ENCODE measurements at regions of chr11 and their contacts with region 1.

Region 1: DNA sequence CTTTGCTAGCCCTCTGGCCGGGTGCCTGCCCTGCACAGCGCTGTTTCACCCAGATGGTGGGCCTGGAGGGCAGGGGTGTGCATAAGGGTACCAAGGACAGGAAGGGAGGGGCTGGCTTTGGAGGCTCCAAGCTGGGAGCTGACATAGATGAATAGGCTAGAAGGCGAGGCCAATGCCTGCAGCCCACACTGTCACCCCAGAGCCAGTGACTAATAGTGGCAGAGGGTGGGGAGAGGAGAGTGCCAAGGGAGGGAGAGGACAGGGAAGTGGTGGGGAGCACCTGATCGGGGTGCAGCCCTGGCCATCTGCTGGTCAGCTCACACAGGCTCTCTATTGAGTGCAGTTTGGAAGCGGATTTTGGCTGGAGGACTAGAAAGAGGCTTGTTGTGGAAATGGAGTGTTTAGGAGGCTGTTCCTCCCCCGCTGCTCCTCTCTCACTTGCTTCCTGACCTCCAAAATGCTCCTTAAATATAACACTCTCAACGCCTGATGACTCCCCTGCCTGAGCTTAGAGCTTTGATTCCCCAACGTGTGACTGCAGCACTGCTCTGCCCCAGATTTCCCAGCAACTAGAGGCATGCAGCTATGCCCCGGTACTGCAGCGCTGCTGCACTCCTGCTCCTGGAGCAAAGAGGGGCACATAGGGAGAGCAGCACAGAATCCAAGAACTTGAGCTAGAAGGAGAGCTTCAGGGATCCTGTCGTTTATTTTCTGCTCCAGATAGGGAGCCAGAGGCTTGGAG is 89.2 kb downstream of the GRAMD1B start:
- DNase-seq: no peak
- CTCF ChIP-seq: no peak

Region 2: GRCh38 chr11:123505546-123506299 is 13.5 kb before region 1 on chr11:
- CTCF ChIA-PET with region 1: interaction called, 47 read pairs
- POLR2A ChIA-PET with region 1: no interaction called
- DNase-seq: no peak
- CTCF ChIP-seq: no peak

Region 3: GRCh38 chr11:123536690-123537437 is 17.6 kb after region 1 on chr11:
- CTCF ChIA-PET with region 1: interaction called, 17 read pairs
- POLR2A ChIA-PET with region 1: no interaction called
- DNase-seq: no peak
- CTCF ChIP-seq: no peak

Region 4: DNA sequence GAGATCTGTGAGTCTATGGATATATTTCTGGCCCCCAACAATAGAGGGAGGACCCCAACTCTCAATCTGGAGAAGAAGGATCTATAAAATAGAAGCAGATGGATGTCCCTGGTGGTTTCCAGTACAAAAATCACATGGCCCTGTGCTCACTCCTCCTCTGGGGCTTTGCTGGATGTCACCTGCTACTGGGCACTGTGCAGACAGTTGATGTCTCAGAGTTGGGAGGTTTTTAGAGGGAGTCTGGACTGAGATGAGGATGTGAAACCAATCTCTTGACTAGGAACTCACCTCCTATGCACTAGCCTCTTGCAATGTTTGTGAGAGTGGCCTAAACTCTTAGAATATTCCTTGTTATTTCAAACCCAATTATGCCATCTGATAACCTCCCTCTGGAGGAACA is 28.0 kb after region 1 on chr11:
- CTCF ChIA-PET with region 1: interaction called, 11 read pairs
- POLR2A ChIA-PET with region 1: no interaction called
- DNase-seq: peak; percentile 69
- CTCF ChIP-seq: no peak

Region 5: DNA sequence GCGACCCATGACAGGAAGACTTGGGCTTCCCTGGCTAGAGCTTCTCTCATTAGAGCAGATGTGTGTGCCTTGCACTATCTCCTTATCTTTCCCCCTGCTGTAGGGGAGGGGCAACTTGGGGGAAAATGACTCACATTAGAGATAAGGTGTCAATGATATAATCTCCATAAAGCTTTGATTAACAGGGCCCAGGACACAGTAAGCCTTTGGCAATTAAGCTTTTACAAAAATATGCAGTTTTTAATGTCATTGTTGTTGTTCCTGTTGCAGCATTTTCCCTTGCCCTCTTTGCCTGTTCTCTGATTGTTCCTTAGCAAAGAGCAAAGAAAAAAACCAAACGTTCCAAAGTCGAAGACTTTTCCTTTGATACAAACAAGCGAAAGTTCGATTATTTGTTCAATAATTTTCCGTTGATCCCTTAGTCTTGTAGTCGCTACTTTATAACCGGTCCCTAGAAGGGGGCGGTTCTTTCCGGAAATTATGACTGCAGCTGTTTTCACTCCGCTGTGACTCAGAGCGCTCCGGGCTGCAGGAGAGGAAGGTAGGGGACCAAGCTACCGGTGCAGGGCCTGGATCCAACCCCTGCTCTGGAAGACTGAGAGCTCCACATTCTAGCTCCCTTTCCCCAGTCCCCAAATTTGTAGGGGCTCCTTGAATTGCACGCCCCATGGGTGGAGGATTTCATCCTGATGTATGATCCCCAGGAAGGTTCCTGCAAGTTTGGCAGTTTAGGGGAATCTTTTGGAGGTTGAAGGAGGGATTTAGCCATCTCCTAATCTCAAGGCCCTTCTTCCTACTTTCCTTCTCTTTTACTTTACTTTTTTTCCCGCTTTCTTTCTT is 595.9 kb after region 1 on chr11 and contains the start of gene VWA5A:
- CTCF ChIA-PET with region 1: no interaction called
- POLR2A ChIA-PET with region 1: no interaction called
- DNase-seq: peak; percentile 75
- CTCF ChIP-seq: no peak

Measured in GM10248 (cell line).